Activated B cell treated with CpG ODN at 0.5 μM for 24 hours (primary cell): ENCODE measurements at regions of chr22 and their contacts with region 1.

Region 1: GRCh38 chr22:42959576-42960509 is 55.1 kb downstream of the PACSIN2 start:
- DNase-seq: no peak
- ATAC-seq: no peak
- H3K4me3 Mint-ChIP-seq: peak overlapping the region; percentile 29
- H3K27ac Mint-ChIP-seq: peak overlapping the region; percentile 31
- H3K4me1 Mint-ChIP-seq: peaks cover 55% of the 10 kb centered on the region
- H3K27me3 Mint-ChIP-seq: no peaks in the 10 kb centered on the region
- CTCF ChIP-seq: no peak

Region 2: GRCh38 chr22:42873356-42873755 is 86.5 kb before region 1 on chr22:
- CTCF ChIA-PET with region 1: no interaction called
- POLR2A ChIA-PET with region 1: no interaction called
- intact Hi-C with region 1: no loop called
- DNase-seq: no peak
- ATAC-seq: no peak
- H3K4me3 Mint-ChIP-seq: no peak overlapping the region
- H3K27ac Mint-ChIP-seq: no peak overlapping the region
- H3K4me1 Mint-ChIP-seq: no peaks in the 10 kb centered on the region
- H3K27me3 Mint-ChIP-seq: no peaks in the 10 kb centered on the region
- CTCF ChIP-seq: no peak

Region 3: GRCh38 chr22:42919199-42919598 is 40.6 kb before region 1 on chr22:
- CTCF ChIA-PET with region 1: no interaction called
- POLR2A ChIA-PET with region 1: interaction called, 12 read pairs
- intact Hi-C with region 1: loop called (anchors 10 kb)
- DNase-seq: no peak
- ATAC-seq: peak; percentile 22
- H3K4me3 Mint-ChIP-seq: no peak overlapping the region
- H3K27ac Mint-ChIP-seq: peak overlapping the region; percentile 30
- H3K4me1 Mint-ChIP-seq: peaks cover 51% of the 10 kb centered on the region
- H3K27me3 Mint-ChIP-seq: no peaks in the 10 kb centered on the region
- CTCF ChIP-seq: no peak

Region 4: GRCh38 chr22:43077121-43077877 is 117.5 kb after region 1 on chr22:
- CTCF ChIA-PET with region 1: no interaction called
- POLR2A ChIA-PET with region 1: no interaction called
- intact Hi-C with region 1: no loop called
- DNase-seq: no peak
- ATAC-seq: no peak
- H3K4me3 Mint-ChIP-seq: no peak overlapping the region
- H3K27ac Mint-ChIP-seq: no peak overlapping the region
- H3K4me1 Mint-ChIP-seq: no peaks in the 10 kb centered on the region
- H3K27me3 Mint-ChIP-seq: no peaks in the 10 kb centered on the region
- CTCF ChIP-seq: no peak